ENCODE measurements at regions of chr4 and their contacts with region 1.

Region 1: DNA sequence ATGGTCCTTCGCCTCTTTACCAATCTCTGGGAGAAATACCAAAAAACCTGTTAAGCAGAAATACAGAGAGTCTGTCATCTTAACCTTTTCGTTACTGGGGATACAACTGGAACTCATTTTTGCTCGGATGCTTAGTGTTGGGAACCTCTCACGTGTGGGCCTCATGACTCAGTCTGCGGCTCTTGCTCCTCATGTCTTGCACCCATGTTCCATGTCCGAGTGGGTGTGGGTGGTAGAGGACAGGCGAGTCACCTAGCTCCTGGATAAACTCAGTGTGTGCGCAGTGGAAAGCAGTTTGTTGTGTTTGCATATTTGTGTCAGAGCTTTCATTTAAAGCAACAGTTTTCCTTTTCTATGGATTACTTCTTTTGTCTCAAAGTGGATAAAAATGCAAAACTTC is 70.6 kb downstream of the TNIP2 start:
- DNase-seq: no peak
- H3K4me3 ChIP-seq: no peak overlapping the region
- H3K27ac ChIP-seq: no peak overlapping the region
- H3K4me1 ChIP-seq: no peaks in the 10 kb centered on the region
- H3K27me3 ChIP-seq: no peaks in the 10 kb centered on the region
- CTCF ChIP-seq: no peak

Region 2: GRCh38 chr4:2536193-2537010 is 149.1 kb before region 1 on chr4 and contains the start of gene FAM193A:
- CTCF ChIA-PET with region 1: interaction called, 13 read pairs
- POLR2A ChIA-PET with region 1: no interaction called
- intact Hi-C with region 1: no loop called
- DNase-seq: peak; percentile 96 to 99
- H3K4me3 ChIP-seq: peak within 1 kb of the TSS; percentile 81
- H3K27ac ChIP-seq: peak within 1 kb of the TSS; percentile 44; the same call in 1 of the 2 replicates
- H3K4me1 ChIP-seq: peaks cover 13% of the 10 kb centered on the region; the same call in 1 of the 2 replicates
- H3K27me3 ChIP-seq: no peaks in the 10 kb centered on the region
- CTCF ChIP-seq: no peak
- total RNA-seq, gene FAM193A: 20.1 and 23.4 TPM in 2 replicates

Region 3: DNA sequence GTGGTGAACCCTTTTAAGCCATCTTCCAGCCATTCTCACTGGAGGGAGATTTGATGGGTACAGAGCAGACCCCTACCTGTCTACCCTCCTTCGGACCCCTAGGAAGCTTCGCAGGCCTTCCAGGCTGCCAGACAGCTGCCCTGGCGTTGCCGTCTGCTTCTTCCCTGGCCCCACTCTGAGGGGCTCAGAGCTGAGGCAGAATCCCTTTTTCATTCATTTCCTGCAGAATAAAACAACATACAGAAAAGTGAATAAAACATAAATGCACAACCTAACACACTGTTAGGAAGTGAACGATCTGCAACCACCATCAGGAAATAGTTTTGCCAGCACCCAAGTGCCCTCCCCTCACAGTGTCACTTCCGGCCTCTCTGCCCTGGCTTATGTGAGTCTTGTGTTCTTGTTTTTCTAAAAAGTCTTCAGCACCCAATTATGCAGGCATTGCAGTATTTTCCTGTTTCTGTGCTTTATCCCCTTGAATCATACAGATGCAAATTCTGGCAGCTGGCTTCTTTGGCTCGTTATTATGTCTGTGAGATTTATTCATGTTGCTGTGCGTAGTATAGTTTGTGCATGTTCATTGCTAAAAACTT is 152.5 kb after region 1 on chr4:
- CTCF ChIA-PET with region 1: no interaction called
- POLR2A ChIA-PET with region 1: no interaction called
- intact Hi-C with region 1: no loop called
- DNase-seq: no peak
- H3K4me3 ChIP-seq: no peak overlapping the region
- H3K27ac ChIP-seq: no peak overlapping the region
- H3K4me1 ChIP-seq: no peaks in the 10 kb centered on the region
- H3K27me3 ChIP-seq: no peaks in the 10 kb centered on the region
- CTCF ChIP-seq: no peak

Measured in PC-9 (cell line).